CD8-positive, alpha-beta memory T cell (primary cell): ENCODE measurements at regions of chr3 and their contacts with region 1.

Region 1: DNA sequence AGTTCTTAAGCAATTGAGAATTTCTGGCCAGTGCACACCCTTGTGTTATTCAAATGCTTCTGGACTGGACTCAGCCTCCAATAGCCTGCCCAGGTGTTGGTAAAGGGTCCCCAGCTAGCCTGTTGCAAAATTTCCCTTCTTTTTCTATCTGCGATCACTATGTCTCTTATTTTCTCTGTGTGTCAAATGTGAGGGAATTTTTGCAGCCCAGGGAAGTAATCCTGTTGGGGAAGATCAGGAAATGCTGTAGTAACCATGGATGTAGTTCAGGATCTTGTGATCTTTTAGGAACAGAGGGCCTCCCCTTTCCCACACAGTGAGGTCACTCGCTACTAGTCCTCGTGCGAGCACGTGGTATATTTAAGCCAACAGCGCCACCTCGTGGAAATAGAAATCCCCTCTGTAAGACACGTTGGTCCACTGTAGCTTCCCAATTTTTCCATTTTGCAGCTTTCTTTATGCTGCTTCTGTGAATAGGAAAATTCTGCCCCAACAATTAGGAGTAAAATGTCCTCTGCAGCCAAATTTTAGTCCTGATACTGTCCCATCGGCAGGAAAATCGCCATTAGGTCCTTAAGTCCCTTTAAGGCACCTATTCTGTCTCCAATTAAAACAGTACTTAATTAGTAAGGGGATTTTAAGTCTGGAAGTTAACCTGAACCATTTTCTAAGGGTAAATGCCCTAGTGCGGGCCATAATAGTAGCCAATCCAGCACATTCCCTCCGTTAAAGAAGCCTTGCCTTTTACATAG is 4.0 kb upstream of the SMCO1 start:
- DNase-seq: peak; percentile 28 to 72 (median 40)
- H3K4me3 ChIP-seq: no peak overlapping the region
- H3K4me3 Mint-ChIP-seq: no peak overlapping the region
- H3K27ac ChIP-seq: no peak overlapping the region
- H3K27ac Mint-ChIP-seq: no peak overlapping the region
- H3K4me1 ChIP-seq: no peaks in the 10 kb centered on the region
- H3K4me1 Mint-ChIP-seq: peaks cover 0 to 1% (median 0%) of the 10 kb centered on the region in 3 donors
- H3K27me3 ChIP-seq: no peaks in the 10 kb centered on the region
- H3K27me3 Mint-ChIP-seq: peaks cover 2 to 9% of the 10 kb centered on the region in 2 donors

Region 2: GRCh38 chr3:196254376-196255283 is 264.5 kb before region 1 on chr3:
- CTCF ChIA-PET with region 1: interaction called, 20 read pairs
- POLR2A ChIA-PET with region 1: no interaction called
- DNase-seq: no peak
- H3K4me3 ChIP-seq: no peak overlapping the region
- H3K4me3 Mint-ChIP-seq: no peak overlapping the region
- H3K27ac ChIP-seq: no peak overlapping the region
- H3K27ac Mint-ChIP-seq: peak overlapping the region in 3 of 8 donors; percentile 4 to 65 (median 7)
- H3K4me1 ChIP-seq: no peaks in the 10 kb centered on the region
- H3K4me1 Mint-ChIP-seq: peaks cover 4 to 10% (median 4%) of the 10 kb centered on the region in 3 donors
- H3K27me3 ChIP-seq: no peaks in the 10 kb centered on the region
- H3K27me3 Mint-ChIP-seq: no peaks in the 10 kb centered on the region

Region 3: DNA sequence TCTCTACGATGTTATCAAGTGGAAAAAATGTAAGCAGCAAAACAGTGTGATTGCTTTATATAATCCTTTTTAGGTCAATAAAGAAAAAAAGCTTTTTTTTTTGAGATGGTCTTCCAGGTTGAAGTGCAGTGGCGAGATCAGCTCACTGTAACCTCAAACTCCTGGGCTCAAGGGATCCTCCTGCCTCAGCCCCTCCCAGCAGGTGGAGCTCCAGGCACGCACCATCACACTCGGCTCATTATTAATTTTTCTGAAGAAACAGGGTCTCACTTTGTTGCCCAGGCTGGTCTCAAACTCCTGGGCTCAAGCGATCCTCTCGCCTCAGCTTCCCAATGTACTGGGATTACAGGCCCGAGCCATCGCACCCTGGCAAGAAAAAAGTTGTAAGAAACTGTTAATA is 32.9 kb before region 1 on chr3:
- CTCF ChIA-PET with region 1: interaction called, 10 read pairs
- POLR2A ChIA-PET with region 1: no interaction called
- DNase-seq: peak in 1 of 5 donors; percentile 13
- H3K4me3 ChIP-seq: no peak overlapping the region
- H3K4me3 Mint-ChIP-seq: no peak overlapping the region
- H3K27ac ChIP-seq: no peak overlapping the region
- H3K27ac Mint-ChIP-seq: no peak overlapping the region
- H3K4me1 ChIP-seq: no peaks in the 10 kb centered on the region
- H3K4me1 Mint-ChIP-seq: peaks cover 12 to 26% (median 19%) of the 10 kb centered on the region in 3 donors
- H3K27me3 ChIP-seq: no peaks in the 10 kb centered on the region
- H3K27me3 Mint-ChIP-seq: peaks cover 0 to 2% of the 10 kb centered on the region in 2 donors